Mammary epithelial cell (primary cell): ENCODE measurements at regions of chr2 and their contacts with region 1.

Region 1: GRCh38 chr2:26852405-26853306 is 4.7 kb downstream of the DPYSL5 start:
- DNase-seq: no peak
- H3K4me3 ChIP-seq: no peak overlapping the region
- H3K27ac ChIP-seq: no peak overlapping the region
- H3K4me1 ChIP-seq: peaks cover 15% of the 10 kb centered on the region
- H3K27me3 ChIP-seq: peaks cover 32% of the 10 kb centered on the region
- CTCF ChIP-seq: no peak

Region 2: GRCh38 chr2:26892922-26893524 is 40.4 kb after region 1 on chr2:
- CTCF ChIA-PET with region 1: no interaction called
- dilution Hi-C with region 1: loop called (anchors 5 kb)
- in situ Hi-C with region 1: no loop called
- intact Hi-C with region 1: no loop called
- DNase-seq: no peak
- H3K4me3 ChIP-seq: no peak overlapping the region
- H3K27ac ChIP-seq: no peak overlapping the region
- H3K4me1 ChIP-seq: no peaks in the 10 kb centered on the region
- H3K27me3 ChIP-seq: peaks cover 3% of the 10 kb centered on the region
- CTCF ChIP-seq: no peak